Activated T-helper 1 cell treated with anti-CD3 and anti-CD28 coated beads, Interleukin-12 subunit alpha, Interleukin-12 subunit beta, Interleukin-2, Interleukin-4 antibody, amounts not matched to agents 30 ng/mL and 10 ng/mL and 1 ng/mL, durations not matched to agents 14 hours and 24 hours and 36 hours (primary cell): ENCODE measurements at regions of chr6 and their contacts with region 1.

Region 1: GRCh38 chr6:42453031-42453653 is 1.4 kb upstream of the TRERF1 start:
- DNase-seq: peak; percentile 76
- H3K4me3 Mint-ChIP-seq: peak overlapping the region; percentile 100
- H3K27ac Mint-ChIP-seq: peak overlapping the region; percentile 68
- H3K4me1 Mint-ChIP-seq: peaks cover 39% of the 10 kb centered on the region
- H3K27me3 Mint-ChIP-seq: no peaks in the 10 kb centered on the region

Region 2: DNA sequence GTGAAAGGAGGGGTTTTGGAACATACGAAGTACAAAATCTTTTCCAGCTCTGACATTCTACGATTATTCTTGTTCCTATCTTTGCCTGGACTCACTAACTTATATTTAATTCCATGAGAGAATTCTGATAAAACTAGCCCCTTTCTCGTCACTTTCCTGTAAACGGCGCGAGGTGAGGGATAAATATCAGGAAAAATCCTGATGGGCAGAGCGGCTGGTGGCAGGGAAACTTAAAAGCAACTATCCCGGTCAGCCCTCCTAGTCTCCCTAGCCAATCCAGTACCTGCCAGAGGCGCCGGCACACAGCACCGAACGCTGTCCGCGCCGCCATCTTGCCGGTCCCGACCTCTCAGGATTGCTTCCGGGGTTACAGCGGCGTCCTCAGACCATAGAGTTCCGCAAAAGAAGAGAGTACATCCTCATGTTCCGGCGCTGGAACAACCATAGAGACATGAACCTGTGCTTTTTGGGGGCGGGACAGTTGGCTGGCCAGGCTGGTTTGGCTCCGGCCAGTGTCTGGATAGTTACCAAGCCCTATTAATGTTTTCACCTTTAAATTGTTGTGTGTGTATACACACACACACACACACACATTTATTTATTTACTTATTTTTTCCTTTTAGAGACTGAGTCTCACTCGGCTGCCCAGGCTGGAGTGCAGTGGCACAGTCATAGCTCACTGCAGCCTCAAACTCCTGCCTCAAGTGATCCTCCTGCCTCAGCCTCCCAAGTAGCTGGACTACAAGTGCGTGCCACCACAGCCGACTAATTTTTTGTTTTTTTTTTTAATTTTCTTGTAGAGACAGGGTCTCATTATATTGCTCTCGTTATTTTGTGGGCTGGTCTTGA is 235.4 kb before region 1 on chr6 and contains the start of gene MRPS10:
- intact Hi-C with region 1: loop called (anchors 2 kb)
- DNase-seq: peak; percentile 89
- H3K4me3 Mint-ChIP-seq: peak within 1 kb of the TSS; percentile 96
- H3K27ac Mint-ChIP-seq: peak within 1 kb of the TSS; percentile 89
- H3K4me1 Mint-ChIP-seq: peaks cover 20% of the 10 kb centered on the region
- H3K27me3 Mint-ChIP-seq: no peaks in the 10 kb centered on the region
- total RNA-seq, gene MRPS10: 48.8 and 49.7 TPM in 2 replicates

Region 3: DNA sequence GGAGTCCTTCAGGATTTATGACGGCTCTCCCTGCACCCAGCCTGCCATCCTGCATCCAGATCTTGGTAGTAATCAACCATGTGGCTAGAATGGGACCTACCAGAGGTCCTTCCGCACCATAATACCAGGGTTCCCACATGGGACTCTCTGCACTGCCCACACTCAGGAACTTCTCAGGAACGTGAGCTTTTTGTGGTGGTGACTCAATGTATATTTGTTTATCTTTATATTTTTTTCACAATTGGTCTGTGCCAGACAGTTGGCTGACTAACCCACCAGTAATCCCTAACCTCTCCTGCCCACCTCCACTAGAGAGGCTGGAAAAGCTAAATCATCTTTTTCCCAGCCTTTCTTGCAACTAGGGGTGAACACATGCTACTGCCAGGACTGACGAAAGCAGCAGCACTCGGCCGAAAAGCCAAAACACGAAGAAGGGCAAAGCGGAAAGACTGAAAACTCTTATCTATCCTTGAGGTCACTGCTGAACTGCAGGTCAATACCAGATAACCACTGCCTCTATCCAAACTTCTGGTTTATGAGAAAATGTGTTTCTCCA is 114.4 kb before region 1 on chr6:
- intact Hi-C with region 1: loop called (anchors 1 kb)
- DNase-seq: no peak
- H3K4me3 Mint-ChIP-seq: peak overlapping the region; percentile 49
- H3K27ac Mint-ChIP-seq: peak overlapping the region; percentile 89
- H3K4me1 Mint-ChIP-seq: peaks cover 84% of the 10 kb centered on the region
- H3K27me3 Mint-ChIP-seq: no peaks in the 10 kb centered on the region

Region 4: DNA sequence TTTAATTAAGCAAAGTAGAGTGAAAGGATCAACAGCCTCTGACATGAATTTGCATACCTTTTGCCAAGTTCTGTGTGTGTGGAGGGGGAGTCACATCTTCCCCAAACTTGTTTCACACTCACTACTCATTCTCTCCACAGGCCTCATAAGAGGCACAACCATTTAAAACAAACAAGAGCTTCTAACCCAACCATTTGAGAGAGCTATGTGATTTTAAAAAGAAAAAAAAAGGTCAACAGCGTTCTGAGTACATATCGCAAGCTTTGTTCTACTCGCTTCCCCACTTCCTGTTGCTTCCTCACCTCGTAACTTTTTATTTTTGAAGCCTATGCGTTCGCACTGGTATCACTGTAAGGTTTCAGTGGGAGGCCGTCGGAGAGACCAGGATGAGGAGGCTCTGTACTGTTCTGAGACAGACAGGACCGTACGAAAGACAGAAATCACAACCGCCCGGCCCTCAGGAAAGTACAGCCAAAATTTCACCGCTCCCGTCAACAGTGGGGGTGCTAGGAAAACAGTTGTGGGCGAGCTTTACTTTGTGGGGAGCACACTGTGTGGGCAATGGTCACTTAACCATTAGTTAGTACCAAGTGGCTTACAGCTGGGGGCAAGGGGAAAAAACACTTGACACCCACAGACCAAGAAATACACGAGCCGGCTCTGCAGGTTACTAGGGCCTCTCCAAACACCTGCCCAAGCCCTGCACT is 62.8 kb before region 1 on chr6:
- intact Hi-C with region 1: loop called (anchors 1 kb)
- DNase-seq: peak; percentile 60
- H3K4me3 Mint-ChIP-seq: peak overlapping the region; percentile 78
- H3K27ac Mint-ChIP-seq: peak overlapping the region; percentile 99
- H3K4me1 Mint-ChIP-seq: peaks cover 92% of the 10 kb centered on the region
- H3K27me3 Mint-ChIP-seq: no peaks in the 10 kb centered on the region

Region 5: DNA sequence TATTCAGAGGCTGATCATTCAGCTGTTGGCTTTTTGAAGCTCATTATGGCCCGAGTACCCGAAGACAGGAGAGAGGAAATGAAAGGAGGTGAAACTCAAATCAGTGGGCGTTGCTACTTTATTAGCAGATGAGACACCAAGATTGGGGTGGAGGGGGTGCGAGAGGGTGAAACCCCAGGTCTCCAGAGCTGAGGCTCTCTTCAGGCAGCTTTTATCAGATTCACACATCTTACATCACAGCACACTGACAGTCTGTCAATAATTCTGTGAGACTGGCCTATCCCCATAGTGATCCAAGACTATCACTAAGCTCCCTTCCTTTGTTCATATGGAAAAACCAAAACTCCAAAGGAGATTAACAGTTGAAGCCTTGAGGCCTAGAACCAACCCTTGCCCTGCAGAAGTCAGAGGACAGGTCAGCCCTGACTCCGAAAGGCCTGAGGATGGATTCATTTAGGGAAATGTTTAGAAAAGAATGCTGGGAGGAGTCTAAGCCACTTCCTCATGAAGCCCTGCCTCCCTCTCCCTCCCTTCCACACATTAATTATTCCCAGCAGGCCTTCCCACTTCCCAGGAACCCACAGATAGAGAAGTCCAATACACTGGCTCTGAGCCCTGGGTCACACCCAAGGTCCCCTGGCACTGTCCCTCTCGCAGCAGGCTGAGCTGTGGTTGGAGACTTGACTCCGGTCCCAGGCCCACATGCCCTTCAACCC is 24.7 kb before region 1 on chr6:
- intact Hi-C with region 1: loop called (anchors 1 kb)
- DNase-seq: no peak
- H3K4me3 Mint-ChIP-seq: no peak overlapping the region
- H3K27ac Mint-ChIP-seq: peak overlapping the region; percentile 28
- H3K4me1 Mint-ChIP-seq: peaks cover 60% of the 10 kb centered on the region
- H3K27me3 Mint-ChIP-seq: no peaks in the 10 kb centered on the region

Region 6: GRCh38 chr6:42547407-42548329 is 94.5 kb after region 1 on chr6:
- intact Hi-C with region 1: loop called (anchors 1 kb)
- DNase-seq: peak; percentile 82
- H3K4me3 Mint-ChIP-seq: peak overlapping the region; percentile 71
- H3K27ac Mint-ChIP-seq: peak overlapping the region; percentile 29
- H3K4me1 Mint-ChIP-seq: peaks cover 13% of the 10 kb centered on the region
- H3K27me3 Mint-ChIP-seq: peaks cover 18% of the 10 kb centered on the region